Activated T-helper 2 cell treated with anti-CD3 and anti-CD28 coated beads, Interferon-gamma antibody, Interleukin-2, Interleukin-4, amounts not matched to agents 10 μg/mL and 5 μg/mL and 100 μg/mL, durations not matched to agents 14 hours and 24 hours and 36 hours (primary cell): ENCODE measurements at regions of chr3 and their contacts with region 1.

Region 1: GRCh38 chr3:184250167-184250828 is 826 bp downstream of the EEF1AKMT4 start:
- DNase-seq: peak; percentile 85
- H3K4me3 Mint-ChIP-seq: peak overlapping the region; percentile 95
- H3K27ac Mint-ChIP-seq: peak overlapping the region; percentile 99
- H3K4me1 Mint-ChIP-seq: peaks cover 7% of the 10 kb centered on the region
- H3K27me3 Mint-ChIP-seq: no peaks in the 10 kb centered on the region

Region 2: GRCh38 chr3:183884427-183885296 is 365.6 kb before region 1 on chr3 and contains the start of gene PARL:
- intact Hi-C with region 1: loop called (anchors 2 kb)
- DNase-seq: peak; percentile 93
- H3K4me3 Mint-ChIP-seq: peak within 1 kb of the TSS; percentile 98
- H3K27ac Mint-ChIP-seq: peak within 1 kb of the TSS; percentile 95
- H3K4me1 Mint-ChIP-seq: peaks cover 25% of the 10 kb centered on the region
- H3K27me3 Mint-ChIP-seq: peaks cover 3% of the 10 kb centered on the region
- total RNA-seq, gene PARL: 74.9 and 81.7 TPM in 2 replicates

Region 3: GRCh38 chr3:183988216-183988790 is 262.0 kb before region 1 on chr3:
- intact Hi-C with region 1: no loop called
- DNase-seq: no peak
- H3K4me3 Mint-ChIP-seq: no peak overlapping the region
- H3K27ac Mint-ChIP-seq: no peak overlapping the region
- H3K4me1 Mint-ChIP-seq: peaks cover 15% of the 10 kb centered on the region
- H3K27me3 Mint-ChIP-seq: no peaks in the 10 kb centered on the region

Region 4: GRCh38 chr3:184099806-184100686 is 150.3 kb before region 1 on chr3:
- intact Hi-C with region 1: no loop called
- DNase-seq: no peak
- H3K4me3 Mint-ChIP-seq: no peak overlapping the region
- H3K27ac Mint-ChIP-seq: no peak overlapping the region
- H3K4me1 Mint-ChIP-seq: no peaks in the 10 kb centered on the region
- H3K27me3 Mint-ChIP-seq: no peaks in the 10 kb centered on the region

Region 5: GRCh38 chr3:184135149-184135910 is 115.0 kb before region 1 on chr3 and contains the start of gene EIF2B5:
- intact Hi-C with region 1: loop called (anchors 1 kb)
- DNase-seq: peak; percentile 83
- H3K4me3 Mint-ChIP-seq: peak within 1 kb of the TSS; percentile 91
- H3K27ac Mint-ChIP-seq: peak within 1 kb of the TSS; percentile 92
- H3K4me1 Mint-ChIP-seq: peaks cover 21% of the 10 kb centered on the region
- H3K27me3 Mint-ChIP-seq: peaks cover 2% of the 10 kb centered on the region
- total RNA-seq, gene EIF2B5: 70.2 and 75.0 TPM in 2 replicates

Region 6: GRCh38 chr3:184185461-184186308 is 64.6 kb before region 1 on chr3 and contains the start of gene ABCF3:
- intact Hi-C with region 1: loop called (anchors 1 kb)
- DNase-seq: peak; percentile 99
- H3K4me3 Mint-ChIP-seq: peak within 1 kb of the TSS; percentile 94
- H3K27ac Mint-ChIP-seq: peak within 1 kb of the TSS; percentile 93
- H3K4me1 Mint-ChIP-seq: peaks cover 18% of the 10 kb centered on the region
- H3K27me3 Mint-ChIP-seq: no peaks in the 10 kb centered on the region
- total RNA-seq, gene ABCF3: 68.2 and 73.4 TPM in 2 replicates

Region 7: DNA sequence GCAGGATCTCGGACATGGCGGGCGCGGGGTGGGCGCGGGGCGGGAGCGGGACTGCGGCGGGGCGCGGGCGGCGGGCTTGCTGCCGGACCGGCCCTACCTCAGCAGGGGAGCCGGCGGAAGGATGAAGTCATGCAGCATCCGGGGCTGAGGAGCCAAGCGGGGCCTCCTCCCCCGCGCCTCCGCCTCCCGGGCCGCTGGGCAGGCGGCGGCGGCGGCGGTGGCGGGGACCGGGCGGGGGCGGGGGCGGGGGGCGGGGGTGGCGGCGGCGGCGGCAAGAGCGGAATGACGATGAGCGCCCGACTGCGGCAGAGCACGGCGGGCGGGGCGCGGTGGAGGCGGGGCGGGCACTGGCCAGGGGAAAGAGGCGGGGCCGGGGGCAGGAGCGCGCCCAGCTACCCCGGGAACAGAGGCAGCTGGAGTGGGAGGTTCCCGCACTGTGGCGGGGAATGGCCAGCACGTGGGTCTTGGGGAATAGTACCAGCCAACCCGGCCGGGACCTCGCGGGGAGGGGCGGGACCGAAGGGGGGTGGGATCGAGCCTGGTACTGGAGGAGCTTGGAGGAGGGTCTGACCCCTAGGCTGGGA is 11.1 kb after region 1 on chr3 and contains the start of gene CAMK2N2:
- intact Hi-C with region 1: loop called (anchors 1 kb)
- DNase-seq: peak; percentile 42
- H3K4me3 Mint-ChIP-seq: peak within 1 kb of the TSS; percentile 89
- H3K27ac Mint-ChIP-seq: peak within 1 kb of the TSS; percentile 6
- H3K4me1 Mint-ChIP-seq: peaks cover 14% of the 10 kb centered on the region
- H3K27me3 Mint-ChIP-seq: peaks cover 42% of the 10 kb centered on the region
- total RNA-seq, gene CAMK2N2: 0.18 TPM in 1 of 2 replicates, not detected in the other

Region 8: GRCh38 chr3:184314363-184314699 is 64.0 kb after region 1 on chr3 and contains the start of gene EIF4G1:
- intact Hi-C with region 1: loop called (anchors 1 kb)
- DNase-seq: peak; percentile 91
- H3K4me3 Mint-ChIP-seq: peak within 1 kb of the TSS; percentile 87
- H3K27ac Mint-ChIP-seq: peak within 1 kb of the TSS; percentile 86
- H3K4me1 Mint-ChIP-seq: peaks cover 22% of the 10 kb centered on the region
- H3K27me3 Mint-ChIP-seq: no peaks in the 10 kb centered on the region
- total RNA-seq, gene EIF4G1: 624 and 628 TPM in 2 replicates